ENCODE measurements at regions of chr20 and their contacts with region 1.

Region 1: GRCh38 chr20:13121840-13122515 is 99.1 kb upstream of the ISM1 start:
- DNase-seq: no peak
- H3K4me3 ChIP-seq: no peak overlapping the region
- H3K27ac ChIP-seq: no peak overlapping the region
- H3K4me1 ChIP-seq: no peaks in the 10 kb centered on the region
- H3K27me3 ChIP-seq: no peaks in the 10 kb centered on the region
- CTCF ChIP-seq: no peak

Region 2: DNA sequence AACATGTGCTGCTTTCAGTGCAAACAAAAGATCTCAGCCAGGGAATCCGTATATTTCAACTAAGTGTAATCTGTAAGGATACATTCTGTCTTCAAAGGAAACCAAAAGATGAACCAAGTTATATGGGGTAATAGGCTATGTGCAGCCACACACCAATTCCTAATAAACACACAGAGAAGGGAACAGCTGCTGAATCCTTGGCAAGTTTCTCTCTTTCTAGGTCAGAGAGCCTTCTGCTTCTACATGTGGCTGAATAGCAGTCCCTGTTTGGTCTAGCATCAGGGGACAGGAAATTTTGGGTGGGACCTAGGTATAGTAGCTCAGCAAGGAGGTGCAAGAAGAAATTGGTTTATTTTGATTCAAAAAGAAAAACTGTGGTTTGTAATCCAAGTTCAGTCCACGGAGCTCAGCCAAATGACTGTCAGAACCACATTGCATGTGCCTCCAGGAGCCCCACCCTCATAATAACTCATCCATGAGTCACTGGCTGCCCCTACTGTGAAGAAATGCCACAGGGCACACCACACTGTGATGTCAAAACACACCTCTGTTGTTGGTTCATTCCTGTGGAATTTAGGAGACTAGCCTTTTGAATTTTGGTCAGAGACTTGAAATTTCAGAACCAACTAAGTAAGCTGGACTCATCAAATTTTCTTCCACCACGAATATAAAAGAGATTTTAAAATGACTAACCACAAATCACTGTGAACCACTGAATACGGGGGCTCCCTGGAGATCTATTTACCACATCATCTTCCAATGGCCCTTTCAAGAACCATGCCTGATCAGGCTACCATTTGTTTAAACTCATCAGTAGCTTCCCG is 92.1 kb before region 1 on chr20:
- intact Hi-C with region 1: no loop called
- DNase-seq: no peak
- H3K4me3 ChIP-seq: no peak overlapping the region
- H3K27ac ChIP-seq: no peak overlapping the region
- H3K4me1 ChIP-seq: peaks cover 16% of the 10 kb centered on the region
- H3K27me3 ChIP-seq: no peaks in the 10 kb centered on the region
- CTCF ChIP-seq: no peak

Region 3: DNA sequence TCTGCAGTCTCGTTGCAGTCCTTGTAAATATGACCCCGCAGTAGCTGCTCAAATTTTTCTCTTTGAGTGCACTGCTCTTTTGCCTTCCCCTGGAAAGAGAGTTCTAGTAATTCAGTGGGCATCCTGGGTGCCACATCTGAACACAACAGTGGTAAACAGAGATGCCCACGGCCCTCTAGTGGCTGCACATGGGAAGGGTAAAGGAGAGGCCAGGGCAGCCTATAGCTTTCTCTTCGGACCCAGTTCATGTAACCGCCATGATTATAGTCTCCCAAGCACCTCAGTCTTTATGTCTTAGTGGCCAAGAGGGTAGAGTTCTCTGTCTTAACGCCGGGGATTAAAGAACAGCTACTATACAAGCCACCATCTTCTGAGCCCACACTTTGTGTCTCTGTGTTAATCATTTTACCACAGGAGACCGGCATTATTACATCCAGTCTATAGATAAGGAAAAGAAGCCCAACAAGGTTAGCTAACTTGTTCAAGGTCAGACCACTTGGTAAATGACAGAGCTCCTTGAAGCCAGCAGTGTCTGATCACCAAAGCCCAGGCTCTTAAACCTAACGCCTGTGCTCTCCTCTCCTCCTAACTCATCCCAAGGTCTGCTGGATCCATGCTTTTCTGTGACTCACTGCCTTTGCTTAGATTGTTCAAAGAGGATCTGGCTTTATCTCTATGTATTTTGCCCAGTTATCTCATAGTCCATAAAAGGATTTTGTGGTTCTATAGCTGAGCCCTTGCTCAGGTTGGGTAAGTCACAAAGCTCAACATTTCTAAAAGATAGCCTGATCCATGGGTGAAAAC is 180.9 kb after region 1 on chr20:
- intact Hi-C with region 1: loop called (anchors 10 kb)
- DNase-seq: no peak
- H3K4me3 ChIP-seq: no peak overlapping the region
- H3K27ac ChIP-seq: no peak overlapping the region
- H3K4me1 ChIP-seq: no peaks in the 10 kb centered on the region
- H3K27me3 ChIP-seq: peaks cover 10% of the 10 kb centered on the region
- CTCF ChIP-seq: peak; percentile 72

Region 4: GRCh38 chr20:13412806-13413445 is 290.9 kb after region 1 on chr20:
- intact Hi-C with region 1: no loop called
- DNase-seq: no peak
- H3K4me3 ChIP-seq: no peak overlapping the region
- H3K27ac ChIP-seq: no peak overlapping the region
- H3K4me1 ChIP-seq: no peaks in the 10 kb centered on the region
- H3K27me3 ChIP-seq: no peaks in the 10 kb centered on the region
- CTCF ChIP-seq: no peak

Measured in left ventricle myocardium inferior (tissue), 1 donor.